ENCODE measurements at regions of chr1 and their contacts with region 1.

Region 1: DNA sequence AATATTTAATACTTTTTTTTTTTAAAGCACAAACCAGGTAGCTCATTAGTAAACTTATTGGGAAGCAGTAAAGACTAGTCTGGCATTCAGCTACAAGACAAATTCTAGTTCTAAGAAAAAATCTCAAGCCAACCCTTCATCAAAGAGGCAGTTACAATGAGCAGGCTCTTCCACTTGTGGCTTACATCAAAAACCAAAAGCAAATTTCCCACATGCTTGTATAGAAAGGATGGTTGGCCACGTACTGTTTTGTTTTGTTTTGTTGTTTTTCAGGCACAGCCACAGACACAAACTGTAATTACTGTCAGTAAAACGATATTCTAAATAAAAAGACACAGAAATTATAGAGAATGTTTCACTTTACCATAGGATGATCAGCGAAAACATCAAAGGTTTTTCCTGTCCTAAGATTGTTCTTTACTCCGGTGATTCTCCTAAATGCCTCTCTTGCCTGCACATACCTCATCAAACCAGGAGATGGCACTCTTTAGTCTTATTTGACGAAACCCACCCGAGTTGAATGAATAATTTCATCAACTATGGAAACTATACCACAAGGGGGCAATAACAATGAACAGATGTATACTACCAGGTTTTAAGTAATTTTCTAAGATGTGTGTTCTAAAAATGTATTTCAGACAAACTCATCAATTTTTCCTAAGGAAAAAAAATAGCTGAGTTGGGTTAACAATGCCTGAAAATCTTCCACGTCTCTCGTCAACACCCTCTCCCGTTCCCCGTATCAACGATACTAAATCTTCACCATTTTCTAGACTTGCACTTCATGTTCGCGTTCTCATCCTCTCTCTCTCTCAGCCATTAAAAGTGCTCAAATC is 26.9 kb downstream of the RPL5 start:
- DNase-seq: peak in 4 of 5 donors; percentile 39 to 78 (median 69)
- H3K4me3 ChIP-seq: peak overlapping the region; percentile 6
- H3K4me3 Mint-ChIP-seq: peak overlapping the region in 6 of 7 donors; percentile 3 to 66 (median 49)
- H3K27ac ChIP-seq: no peak overlapping the region
- H3K27ac Mint-ChIP-seq: peak overlapping the region in 6 of 8 donors; percentile 5 to 54 (median 11)
- H3K4me1 ChIP-seq: peaks cover 7% of the 10 kb centered on the region
- H3K4me1 Mint-ChIP-seq: peaks cover 11 to 23% (median 18%) of the 10 kb centered on the region in 3 donors
- H3K27me3 ChIP-seq: no peaks in the 10 kb centered on the region
- H3K27me3 Mint-ChIP-seq: peaks cover 0 to 2% of the 10 kb centered on the region in 2 donors

Region 2: DNA sequence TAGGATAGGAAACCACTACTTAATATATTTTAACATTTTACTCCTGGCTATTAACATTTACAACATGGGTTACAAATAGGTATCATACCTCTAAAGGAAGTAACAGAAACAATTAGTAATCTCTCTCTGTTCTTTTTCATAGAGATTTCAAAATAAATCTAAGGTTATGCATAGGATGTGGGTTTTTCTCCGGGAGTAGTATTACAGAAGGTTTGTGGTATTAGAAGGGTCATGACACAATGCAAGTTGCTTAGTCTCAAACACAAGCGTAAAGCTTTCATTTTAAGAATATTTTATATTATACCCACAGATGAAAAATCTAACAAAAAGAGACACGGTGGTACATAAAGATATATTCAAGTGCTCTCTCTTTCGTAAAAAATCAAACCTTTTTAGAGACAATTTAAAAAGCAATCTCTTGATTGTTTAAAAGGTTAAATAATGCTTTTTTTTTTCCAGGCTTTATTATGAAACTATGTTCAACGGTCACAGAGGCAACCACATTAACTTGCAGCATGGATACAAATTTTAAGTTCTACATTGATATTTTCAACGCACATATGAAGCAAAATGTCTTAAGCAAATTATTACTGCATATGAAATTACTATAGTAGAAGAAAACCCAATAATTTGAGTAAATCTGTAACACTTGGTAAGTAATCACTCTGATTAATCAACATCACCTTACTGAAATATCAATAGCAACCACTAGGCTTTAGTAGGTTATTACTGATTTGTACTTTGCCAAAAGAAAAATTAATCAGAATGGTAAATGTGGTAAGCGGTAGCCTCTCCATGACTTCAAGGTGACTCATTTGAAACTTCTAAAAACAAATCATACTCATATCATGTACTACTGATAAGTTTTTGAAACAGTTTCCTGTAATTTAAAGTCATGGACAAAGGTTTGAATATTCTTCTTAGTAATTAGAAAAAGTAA is 274.7 kb before region 1 on chr1:
- CTCF ChIA-PET with region 1: no interaction called
- POLR2A ChIA-PET with region 1: no interaction called
- DNase-seq: peak in 2 of 5 donors; percentile 65 to 66
- H3K4me3 ChIP-seq: peak overlapping the region; percentile 11
- H3K4me3 Mint-ChIP-seq: peak overlapping the region; percentile 7 to 76 (median 53)
- H3K27ac ChIP-seq: no peak overlapping the region
- H3K27ac Mint-ChIP-seq: peak overlapping the region; percentile 6 to 90 (median 46)
- H3K4me1 ChIP-seq: peaks cover 33% of the 10 kb centered on the region
- H3K4me1 Mint-ChIP-seq: peaks cover 46 to 75% (median 52%) of the 10 kb centered on the region in 3 donors
- H3K27me3 ChIP-seq: no peaks in the 10 kb centered on the region
- H3K27me3 Mint-ChIP-seq: no peaks in the 10 kb centered on the region

Region 3: DNA sequence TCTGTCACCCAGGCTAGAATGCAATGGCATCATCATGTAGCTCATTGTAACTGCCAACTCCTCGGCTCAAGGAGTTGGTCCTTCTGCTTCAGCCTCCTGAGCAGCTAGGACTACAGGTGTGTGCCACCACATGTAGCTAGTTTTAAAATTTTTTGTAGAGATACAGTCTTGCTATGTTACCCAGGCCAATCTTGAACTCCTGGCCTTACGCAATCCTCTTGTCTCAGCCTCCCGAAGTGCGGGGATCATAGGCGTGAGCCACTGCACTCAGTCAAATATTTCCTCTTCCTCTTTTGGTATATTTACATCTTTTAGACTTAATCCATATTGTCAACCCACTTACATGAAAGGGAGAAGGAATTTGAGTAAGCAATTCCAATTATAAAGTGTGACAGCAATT is 195.0 kb before region 1 on chr1:
- CTCF ChIA-PET with region 1: no interaction called
- POLR2A ChIA-PET with region 1: no interaction called
- DNase-seq: no peak
- H3K4me3 ChIP-seq: no peak overlapping the region
- H3K4me3 Mint-ChIP-seq: no peak overlapping the region
- H3K27ac ChIP-seq: no peak overlapping the region
- H3K27ac Mint-ChIP-seq: no peak overlapping the region
- H3K4me1 ChIP-seq: no peaks in the 10 kb centered on the region
- H3K4me1 Mint-ChIP-seq: no peaks in the 10 kb centered on the region
- H3K27me3 ChIP-seq: no peaks in the 10 kb centered on the region
- H3K27me3 Mint-ChIP-seq: peaks cover 4 to 13% of the 10 kb centered on the region in 2 donors

Region 4: GRCh38 chr1:92831762-92832536 is 26.8 kb before region 1 on chr1 and contains the start of gene RPL5:
- CTCF ChIA-PET with region 1: interaction called, 10 read pairs
- POLR2A ChIA-PET with region 1: interaction called, 3 read pairs
- DNase-seq: peak; percentile 95 to 99 (median 98)
- H3K4me3 ChIP-seq: peak within 1 kb of the TSS; percentile 69
- H3K4me3 Mint-ChIP-seq: peak within 1 kb of the TSS; percentile 93 to 99 (median 98)
- H3K27ac ChIP-seq: peak within 1 kb of the TSS; percentile 90
- H3K27ac Mint-ChIP-seq: peak within 1 kb of the TSS; percentile 94 to 100 (median 98)
- H3K4me1 ChIP-seq: peaks cover 44% of the 10 kb centered on the region
- H3K4me1 Mint-ChIP-seq: peaks cover 45 to 56% (median 49%) of the 10 kb centered on the region in 3 donors
- H3K27me3 ChIP-seq: no peaks in the 10 kb centered on the region
- H3K27me3 Mint-ChIP-seq: peaks cover 0 to 2% of the 10 kb centered on the region in 2 donors
- total RNA-seq, gene RPL5: 1,428 to 1,468 TPM

Region 5: GRCh38 chr1:92870591-92870990 is 11.8 kb after region 1 on chr1:
- CTCF ChIA-PET with region 1: interaction called, 28 read pairs
- POLR2A ChIA-PET with region 1: no interaction called
- DNase-seq: no peak
- H3K4me3 ChIP-seq: no peak overlapping the region
- H3K4me3 Mint-ChIP-seq: no peak overlapping the region
- H3K27ac ChIP-seq: no peak overlapping the region
- H3K27ac Mint-ChIP-seq: peak overlapping the region in 1 of 8 donors; percentile 27
- H3K4me1 ChIP-seq: no peaks in the 10 kb centered on the region
- H3K4me1 Mint-ChIP-seq: peaks cover 0 to 2% (median 0%) of the 10 kb centered on the region in 3 donors
- H3K27me3 ChIP-seq: no peaks in the 10 kb centered on the region
- H3K27me3 Mint-ChIP-seq: peaks cover 0 to 1% of the 10 kb centered on the region in 2 donors

Region 6: GRCh38 chr1:92882819-92883218 is 24.0 kb after region 1 on chr1:
- CTCF ChIA-PET with region 1: interaction called, 19 read pairs
- POLR2A ChIA-PET with region 1: no interaction called
- DNase-seq: peak; percentile 20 to 62 (median 34)
- H3K4me3 ChIP-seq: no peak overlapping the region
- H3K4me3 Mint-ChIP-seq: peak overlapping the region in 6 of 7 donors; percentile 15 to 54 (median 42)
- H3K27ac ChIP-seq: no peak overlapping the region
- H3K27ac Mint-ChIP-seq: peak overlapping the region; percentile 86 to 98 (median 94)
- H3K4me1 ChIP-seq: peaks cover 26% of the 10 kb centered on the region
- H3K4me1 Mint-ChIP-seq: peaks cover 40 to 54% (median 45%) of the 10 kb centered on the region in 3 donors
- H3K27me3 ChIP-seq: no peaks in the 10 kb centered on the region
- H3K27me3 Mint-ChIP-seq: no peaks in the 10 kb centered on the region

Region 7: DNA sequence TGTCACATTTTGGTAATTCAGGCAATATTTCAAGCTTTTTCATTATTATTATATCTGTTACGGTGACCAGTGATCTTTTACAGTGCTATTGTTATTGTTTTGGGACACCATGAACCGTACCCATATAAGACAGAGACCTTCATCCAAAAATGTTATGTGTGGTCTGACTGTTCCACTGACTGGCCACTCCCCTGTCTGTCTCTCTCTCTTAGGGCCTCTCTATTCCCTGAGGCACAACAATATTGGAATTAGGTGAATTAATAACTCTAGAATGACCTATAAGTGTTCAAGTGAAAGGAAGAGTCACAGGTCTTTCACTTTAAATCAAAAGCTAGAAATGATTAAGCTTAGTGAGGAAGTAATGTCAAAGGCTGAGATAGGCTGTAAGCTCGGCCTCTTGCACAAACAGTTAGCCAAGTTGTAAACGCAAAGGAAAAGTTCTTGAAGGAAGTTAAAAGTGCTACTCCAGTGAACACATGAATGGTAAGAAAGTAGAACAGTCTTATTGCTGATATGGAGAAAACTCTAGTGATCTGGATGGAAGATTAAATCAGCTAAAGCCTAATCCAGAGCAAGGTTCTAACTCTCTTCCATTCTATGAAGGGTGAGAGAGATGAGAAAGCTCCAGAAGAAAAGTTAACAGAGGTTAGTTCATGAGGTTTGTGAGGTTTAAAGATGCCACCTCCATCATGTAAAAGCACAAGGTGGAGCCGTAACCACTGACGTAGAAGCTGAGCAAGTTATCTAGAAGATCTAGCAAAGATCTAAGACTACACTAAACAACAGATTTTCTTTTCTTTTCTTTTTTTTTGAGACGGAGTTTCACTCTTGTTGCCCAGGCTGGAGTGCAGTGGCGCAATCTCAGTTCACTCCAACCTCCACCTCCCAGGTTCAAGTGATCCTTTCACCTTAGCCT is 122.2 kb after region 1 on chr1:
- CTCF ChIA-PET with region 1: interaction called, 13 read pairs
- POLR2A ChIA-PET with region 1: no interaction called
- DNase-seq: peak; percentile 9 to 86 (median 82)
- H3K4me3 ChIP-seq: peak overlapping the region; percentile 2
- H3K4me3 Mint-ChIP-seq: peak overlapping the region; percentile 4 to 77 (median 68)
- H3K27ac ChIP-seq: peak overlapping the region; percentile 32
- H3K27ac Mint-ChIP-seq: peak overlapping the region; percentile 88 to 99 (median 96)
- H3K4me1 ChIP-seq: peaks cover 27% of the 10 kb centered on the region
- H3K4me1 Mint-ChIP-seq: peaks cover 22 to 50% (median 39%) of the 10 kb centered on the region in 3 donors
- H3K27me3 ChIP-seq: no peaks in the 10 kb centered on the region
- H3K27me3 Mint-ChIP-seq: no peaks in the 10 kb centered on the region

Region 8: DNA sequence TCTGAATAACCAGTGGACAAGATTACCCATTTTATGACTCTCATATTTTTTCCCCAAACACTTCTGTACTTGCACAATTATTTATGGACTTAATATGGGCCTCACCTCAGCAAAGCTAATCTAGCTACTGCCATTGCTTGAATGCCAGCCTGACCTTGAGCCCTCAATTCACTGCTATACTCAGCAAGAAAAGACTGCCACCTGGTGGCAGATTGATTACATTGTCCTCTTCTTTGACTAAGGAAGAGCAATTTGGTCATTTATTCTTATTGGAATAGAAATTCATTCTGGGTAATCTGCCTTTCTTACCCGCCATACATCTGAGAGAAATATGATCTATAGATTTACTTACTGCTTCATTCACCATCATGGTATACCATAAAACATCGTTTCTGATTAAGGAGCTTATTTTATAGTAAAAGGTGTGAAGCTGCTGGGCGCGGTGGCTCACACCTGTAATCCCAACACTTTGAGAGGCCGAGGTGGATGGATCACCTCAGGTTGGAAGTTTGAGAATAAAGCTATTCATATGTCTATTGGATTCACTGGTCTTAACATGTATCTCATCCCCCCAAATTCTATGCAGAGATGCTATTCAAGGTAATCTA is 135.4 kb after region 1 on chr1:
- CTCF ChIA-PET with region 1: interaction called, 120 read pairs
- POLR2A ChIA-PET with region 1: interaction called, 3 read pairs
- DNase-seq: peak; percentile 47 to 81 (median 74)
- H3K4me3 ChIP-seq: no peak overlapping the region
- H3K4me3 Mint-ChIP-seq: no peak overlapping the region
- H3K27ac ChIP-seq: no peak overlapping the region
- H3K27ac Mint-ChIP-seq: peak overlapping the region in 7 of 8 donors; percentile 9 to 76 (median 31)
- H3K4me1 ChIP-seq: peaks cover 49% of the 10 kb centered on the region
- H3K4me1 Mint-ChIP-seq: peaks cover 35 to 49% (median 48%) of the 10 kb centered on the region in 3 donors
- H3K27me3 ChIP-seq: no peaks in the 10 kb centered on the region
- H3K27me3 Mint-ChIP-seq: peaks cover 0 to 1% of the 10 kb centered on the region in 2 donors

Region 9: DNA sequence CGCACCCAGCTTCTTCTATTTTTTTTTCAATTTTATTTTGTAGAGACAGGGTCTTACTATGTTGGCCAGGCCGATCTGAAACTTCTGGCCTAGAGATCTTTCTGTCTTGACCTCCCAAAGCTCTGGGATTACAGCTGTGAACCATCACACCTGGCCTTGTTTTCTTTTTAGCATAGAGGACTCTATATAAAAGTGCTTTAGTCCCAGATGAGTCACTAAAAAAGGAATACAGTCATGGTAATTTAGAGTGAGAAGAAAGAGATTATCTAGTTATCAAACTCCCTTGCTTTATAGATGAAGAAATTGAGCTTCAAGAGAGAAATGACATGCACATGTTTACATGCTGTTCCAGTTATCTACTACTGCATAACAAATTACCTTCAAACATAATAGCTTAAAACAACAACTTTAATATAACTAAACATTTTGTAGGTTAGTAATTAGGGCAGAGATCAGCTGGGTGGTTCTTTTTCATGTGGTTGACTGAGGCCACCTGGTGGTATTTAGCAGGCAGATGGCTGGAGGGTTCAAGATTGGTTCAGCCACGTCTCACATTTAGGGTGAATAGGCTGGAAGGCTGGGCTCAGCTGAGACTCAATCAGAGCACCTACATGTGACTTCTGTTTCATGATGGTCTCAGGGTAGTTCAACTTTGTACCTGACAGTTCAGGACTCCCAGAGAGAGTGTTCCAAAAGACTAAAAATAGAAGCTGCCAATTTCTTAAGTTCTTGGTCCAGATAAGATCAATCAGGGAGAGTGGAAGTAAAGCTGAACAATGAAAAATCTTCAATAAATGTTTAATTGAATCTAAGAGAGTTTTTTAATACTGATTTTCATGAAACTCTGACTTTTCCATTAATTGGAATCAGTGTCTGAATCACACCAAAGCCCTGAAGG is 203.4 kb after region 1 on chr1:
- CTCF ChIA-PET with region 1: interaction called, 13 read pairs
- POLR2A ChIA-PET with region 1: no interaction called
- DNase-seq: peak; percentile 9 to 63 (median 33)
- H3K4me3 ChIP-seq: no peak overlapping the region
- H3K4me3 Mint-ChIP-seq: no peak overlapping the region
- H3K27ac ChIP-seq: no peak overlapping the region
- H3K27ac Mint-ChIP-seq: peak overlapping the region in 1 of 8 donors; percentile 6
- H3K4me1 ChIP-seq: no peaks in the 10 kb centered on the region
- H3K4me1 Mint-ChIP-seq: no peaks in the 10 kb centered on the region
- H3K27me3 ChIP-seq: no peaks in the 10 kb centered on the region
- H3K27me3 Mint-ChIP-seq: peaks cover 23 to 47% of the 10 kb centered on the region in 2 donors

Region 10: GRCh38 chr1:93244298-93245069 is 385.7 kb after region 1 on chr1:
- CTCF ChIA-PET with region 1: no interaction called
- POLR2A ChIA-PET with region 1: no interaction called
- DNase-seq: no peak
- H3K4me3 ChIP-seq: no peak overlapping the region
- H3K4me3 Mint-ChIP-seq: no peak overlapping the region
- H3K27ac ChIP-seq: no peak overlapping the region
- H3K27ac Mint-ChIP-seq: no peak overlapping the region
- H3K4me1 ChIP-seq: no peaks in the 10 kb centered on the region
- H3K4me1 Mint-ChIP-seq: peaks cover 0 to 2% (median 0%) of the 10 kb centered on the region in 3 donors
- H3K27me3 ChIP-seq: no peaks in the 10 kb centered on the region
- H3K27me3 Mint-ChIP-seq: no peaks in the 10 kb centered on the region

Measured in CD8-positive, alpha-beta memory T cell (primary cell).